ENCODE measurements at regions of chr17 and their contacts with region 1.

Region 1: GRCh38 chr17:38557836-38558727 is 47.7 kb downstream of the SRCIN1 start:
- DNase-seq: peak; percentile 97
- CTCF ChIP-seq: peak; percentile 97

Region 2: DNA sequence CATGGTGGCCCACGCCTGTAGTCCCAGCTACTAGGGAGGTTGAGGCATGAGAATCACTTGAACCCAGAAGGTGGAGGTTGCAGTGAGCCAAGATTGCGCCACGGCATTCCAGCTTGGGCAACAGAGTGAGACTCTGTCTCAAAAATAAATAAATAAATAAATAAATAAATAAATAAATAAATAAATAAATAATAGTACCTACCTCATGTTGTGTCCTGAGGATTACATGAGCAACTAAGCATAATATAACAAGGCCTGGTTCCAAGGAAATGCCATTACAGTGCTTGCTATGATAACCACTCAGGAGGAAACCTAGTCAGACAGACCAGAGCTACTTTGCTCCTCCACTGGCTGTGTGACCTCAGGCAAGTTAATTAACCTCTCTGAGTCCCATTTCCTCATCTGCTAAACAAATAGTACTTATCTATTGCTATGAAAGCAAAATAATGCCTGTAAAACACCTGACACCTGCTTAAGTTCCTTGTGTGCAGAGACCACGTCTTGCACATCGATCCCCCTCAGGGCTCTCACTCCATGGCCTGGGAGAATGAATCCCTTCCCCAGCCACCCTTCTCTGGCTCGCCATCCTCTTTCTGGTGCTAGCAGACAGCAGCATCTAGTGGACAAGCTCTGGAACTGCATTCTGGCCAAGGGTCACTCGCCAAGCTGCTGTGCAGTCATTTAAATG is 109.2 kb after region 1 on chr17:
- in situ Hi-C with region 1: loop called (anchors 10 kb)
- DNase-seq: peak; percentile 82
- CTCF ChIP-seq: peak; percentile 100

Region 3: DNA sequence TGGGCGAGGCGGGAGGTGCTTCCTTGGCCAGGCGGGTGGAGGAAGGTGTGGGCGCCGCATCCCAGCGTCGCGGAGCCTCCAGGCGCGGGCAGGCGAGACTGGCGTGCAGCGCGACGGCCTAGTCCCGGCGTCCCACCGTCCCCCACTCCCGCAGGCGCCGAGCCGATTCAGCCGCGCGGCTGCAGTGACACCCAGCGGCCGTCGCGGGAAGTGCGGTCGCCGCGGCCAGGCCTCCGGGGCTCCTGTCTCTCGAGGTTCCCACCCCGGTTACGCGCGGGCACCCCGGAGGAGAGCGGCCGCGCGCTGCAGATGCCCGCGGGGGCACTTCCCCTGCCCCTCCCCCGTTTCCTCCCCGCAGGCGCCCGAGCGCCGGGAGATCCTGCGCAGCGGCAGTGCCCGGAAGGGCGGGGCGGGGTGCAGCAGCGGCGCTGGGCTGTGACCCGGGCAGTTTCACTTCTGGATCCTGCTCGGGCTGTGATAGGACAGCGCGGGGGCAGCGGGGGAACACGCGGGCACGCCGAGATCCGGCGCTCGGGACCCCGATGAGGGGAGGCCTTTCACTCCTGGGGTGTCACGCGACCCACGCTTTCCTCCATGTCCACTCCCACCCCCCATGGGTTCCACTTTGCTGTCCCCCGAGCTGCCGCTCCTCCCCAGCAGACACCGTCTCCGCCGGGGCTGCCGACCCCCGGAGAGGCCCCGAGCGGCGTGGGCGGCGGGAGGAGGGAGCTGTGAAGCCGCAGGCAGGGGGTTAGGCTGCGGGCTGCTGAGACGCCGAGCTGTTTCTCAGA is 1196.3 kb after region 1 on chr17:
- in situ Hi-C with region 1: no loop called
- DNase-seq: peak; percentile 97
- CTCF ChIP-seq: peak; percentile 95